ENCODE measurements at regions of chr6 and their contacts with region 1.

Region 1: GRCh38 chr6:140043336-140043735 is 668.9 kb upstream of the CITED2 start:
- DNase-seq: no peak
- ATAC-seq: peak in 2 of 8 donors; percentile 26 to 83
- H3K4me3 ChIP-seq: no peak overlapping the region
- H3K27ac ChIP-seq: peak overlapping the region in 5 of 10 donors; percentile 12 to 59 (median 32)
- H3K4me1 ChIP-seq: peaks cover 0 to 45% (median 11%) of the 10 kb centered on the region in 9 donors
- H3K27me3 ChIP-seq: no peaks in the 10 kb centered on the region
- CTCF ChIP-seq: no peak

Region 2: DNA sequence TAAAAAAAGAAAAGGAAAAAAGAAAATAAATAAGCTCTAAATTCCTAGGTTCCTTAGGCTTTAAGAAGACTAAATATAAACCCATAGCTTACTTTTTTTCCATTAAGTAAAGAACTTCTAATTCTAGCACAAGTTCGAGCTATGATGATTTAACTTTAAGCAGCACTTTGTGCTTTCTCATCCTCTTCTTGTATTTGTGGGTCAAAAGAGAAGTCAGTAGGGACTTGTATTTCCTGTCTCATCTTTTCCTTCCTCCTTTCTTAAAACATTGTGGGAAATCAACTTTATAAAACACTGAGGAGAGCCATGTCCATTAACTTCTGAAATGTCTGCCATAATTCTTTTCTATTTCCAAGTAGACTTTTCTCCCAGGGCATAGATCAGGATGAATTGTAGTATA is 31.2 kb before region 1 on chr6:
- intact Hi-C with region 1: loop called in 1 of 10 experiments (anchors 2 kb)
- DNase-seq: no peak
- ATAC-seq: peak in 7 of 8 donors; percentile 29 to 87 (median 68)
- H3K4me3 ChIP-seq: no peak overlapping the region
- H3K27ac ChIP-seq: peak overlapping the region in 9 of 10 donors; percentile 38 to 75 (median 60)
- H3K4me1 ChIP-seq: peaks cover 0 to 18% (median 9%) of the 10 kb centered on the region in 9 donors
- H3K27me3 ChIP-seq: no peaks in the 10 kb centered on the region
- CTCF ChIP-seq: no peak

Region 3: GRCh38 chr6:140107216-140107615 is 63.9 kb after region 1 on chr6:
- intact Hi-C with region 1: no loop called
- DNase-seq: no peak
- ATAC-seq: no peak
- H3K4me3 ChIP-seq: no peak overlapping the region
- H3K27ac ChIP-seq: no peak overlapping the region
- H3K4me1 ChIP-seq: peaks cover 0 to 4% (median 0%) of the 10 kb centered on the region in 9 donors
- H3K27me3 ChIP-seq: no peaks in the 10 kb centered on the region
- CTCF ChIP-seq: no peak

Measured in heart right ventricle (tissue), 16 donors.